ENCODE measurements at regions of chr6 and their contacts with region 1.

Region 1: DNA sequence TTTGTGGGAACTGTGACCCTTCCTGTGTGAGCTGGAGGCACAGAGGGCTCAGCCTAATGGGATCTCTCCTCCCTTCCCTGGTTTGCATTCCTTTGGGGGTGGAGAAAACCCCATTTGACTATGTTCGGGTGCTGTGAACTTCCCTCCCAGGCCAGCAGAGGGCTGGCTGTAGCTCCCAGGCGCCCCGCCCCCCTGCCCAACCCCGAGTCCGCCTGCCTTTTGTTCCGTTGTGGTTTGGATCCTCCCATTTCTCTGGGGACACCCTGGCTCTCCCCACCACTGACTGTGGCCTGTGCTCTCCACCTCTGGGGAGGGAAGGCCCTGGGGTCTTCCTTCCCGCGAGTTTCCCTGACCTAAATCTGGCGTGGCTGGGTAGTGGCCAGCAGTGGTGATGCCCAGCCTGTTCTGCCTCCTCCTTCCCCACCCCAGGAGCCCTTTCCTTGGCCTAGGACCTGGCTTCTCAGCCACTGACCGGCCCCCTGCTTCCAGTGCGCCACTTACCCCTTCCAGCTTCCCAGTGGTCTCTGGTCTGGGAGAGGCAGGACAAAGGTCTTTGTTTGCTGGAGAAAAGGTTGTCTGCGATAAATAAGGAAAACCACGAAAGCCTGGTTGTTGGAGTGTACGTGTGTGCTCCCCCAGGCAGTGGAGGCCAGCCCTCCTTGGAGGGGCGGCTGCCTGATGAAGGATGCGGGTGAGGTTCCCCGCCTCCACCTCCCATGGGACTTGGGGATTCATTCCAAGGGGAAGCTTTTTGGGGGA is 4.9 kb downstream of the VEGFA start:
- DNase-seq: no peak
- H3K4me3 ChIP-seq: peak overlapping the region; percentile 66 to 77
- H3K27ac ChIP-seq: peak overlapping the region; percentile 89
- H3K4me1 ChIP-seq: peaks cover 56% of the 10 kb centered on the region
- H3K27me3 ChIP-seq: no peaks in the 10 kb centered on the region
- CTCF ChIP-seq: peak; percentile 66 to 91 (median 78)
- POLR2A ChIP-seq: no peak

Region 2: GRCh38 chr6:42505377-42505702 is 1269.6 kb before region 1 on chr6:
- intact Hi-C with region 1: no loop called
- DNase-seq: no peak
- H3K4me3 ChIP-seq: no peak overlapping the region
- H3K27ac ChIP-seq: no peak overlapping the region
- H3K4me1 ChIP-seq: no peaks in the 10 kb centered on the region
- H3K27me3 ChIP-seq: no peaks in the 10 kb centered on the region
- CTCF ChIP-seq: no peak
- POLR2A ChIP-seq: no peak

Region 3: GRCh38 chr6:44064089-44064947 is 289.4 kb after region 1 on chr6:
- intact Hi-C with region 1: loop called (anchors 5 kb)
- DNase-seq: peak in 1 of 2 donors; percentile 96
- H3K4me3 ChIP-seq: no peak overlapping the region
- H3K27ac ChIP-seq: peak overlapping the region; percentile 42
- H3K4me1 ChIP-seq: peaks cover 47% of the 10 kb centered on the region
- H3K27me3 ChIP-seq: no peaks in the 10 kb centered on the region
- CTCF ChIP-seq: no peak
- POLR2A ChIP-seq: no peak